ENCODE measurements at regions of chr1 and their contacts with region 1.

Region 1: DNA sequence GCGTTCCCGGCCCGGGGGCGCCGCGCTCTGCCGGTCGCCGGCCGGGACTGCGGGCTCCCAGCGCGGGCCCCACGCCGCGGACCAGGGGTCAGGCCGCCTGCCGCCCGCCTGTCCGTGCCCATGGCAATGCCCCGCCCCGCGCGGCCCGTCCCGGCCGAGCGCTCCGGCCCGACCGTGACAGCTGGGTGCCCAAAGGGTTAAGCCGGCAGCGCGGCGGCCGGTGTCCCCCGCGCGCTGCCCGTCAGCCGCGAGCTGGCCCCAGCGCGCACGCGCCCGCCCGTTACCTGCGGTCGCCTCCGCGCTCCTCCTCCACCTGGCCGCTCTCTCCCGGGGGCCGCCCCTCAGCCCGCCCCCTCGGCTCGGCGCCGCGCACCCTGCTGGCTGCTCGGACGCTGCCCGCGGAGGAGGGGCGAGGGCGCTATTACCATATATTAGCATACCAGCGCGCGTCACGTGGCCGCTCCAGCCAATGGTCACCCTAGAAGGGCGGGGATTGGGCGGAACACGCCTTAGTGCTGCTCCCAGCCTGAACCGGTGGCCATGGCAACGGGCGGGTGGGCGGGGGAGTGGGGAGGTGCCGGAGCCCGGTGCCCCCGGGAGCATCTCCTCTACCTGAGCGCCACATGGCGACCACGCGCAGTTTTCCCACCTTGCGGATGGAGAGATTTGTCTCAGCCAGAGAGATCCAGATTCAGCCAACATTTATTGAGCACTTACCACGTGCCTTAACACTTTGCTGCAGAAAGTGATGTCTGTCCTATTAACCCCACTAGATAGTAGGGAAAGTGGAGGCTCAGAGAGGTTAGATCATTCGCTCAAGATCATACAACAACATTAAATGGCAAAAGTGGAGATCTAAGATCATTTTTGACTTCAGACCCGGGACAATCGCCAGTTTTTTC is at the start of gene PHC2:
- DNase-seq: peak; percentile 95 to 97
- H3K4me3 ChIP-seq: peak within 1 kb of the TSS; percentile 61
- H3K4me3 Mint-ChIP-seq: peak within 1 kb of the TSS; percentile 46
- H3K27ac Mint-ChIP-seq: no peak within 1 kb of the TSS
- H3K4me1 ChIP-seq: peaks cover 6% of the 10 kb centered on the region; the same call in 1 of the 2 replicates
- H3K4me1 Mint-ChIP-seq: no peaks in the 10 kb centered on the region
- H3K27me3 ChIP-seq: no peaks in the 10 kb centered on the region
- H3K27me3 Mint-ChIP-seq: no peaks in the 10 kb centered on the region
- CTCF ChIP-seq: no peak
- total RNA-seq, gene PHC2: 31.8 and 35.2 TPM in 2 replicates

Region 2: GRCh38 chr1:33334081-33334552 is 96.8 kb before region 1 on chr1:
- CTCF ChIA-PET with region 1: no interaction called
- POLR2A ChIA-PET with region 1: no interaction called
- intact Hi-C with region 1: no loop called
- DNase-seq: no peak
- H3K4me3 ChIP-seq: no peak overlapping the region
- H3K4me3 Mint-ChIP-seq: no peak overlapping the region
- H3K27ac Mint-ChIP-seq: no peak overlapping the region
- H3K4me1 ChIP-seq: peaks cover 16% of the 10 kb centered on the region
- H3K4me1 Mint-ChIP-seq: peaks cover 14% of the 10 kb centered on the region
- H3K27me3 ChIP-seq: no peaks in the 10 kb centered on the region
- H3K27me3 Mint-ChIP-seq: no peaks in the 10 kb centered on the region
- CTCF ChIP-seq: no peak

Region 3: GRCh38 chr1:33378976-33379375 is 52.0 kb before region 1 on chr1:
- CTCF ChIA-PET with region 1: no interaction called
- POLR2A ChIA-PET with region 1: interaction called, 3 read pairs
- intact Hi-C with region 1: loop called (anchors 10 kb)
- DNase-seq: no peak
- H3K4me3 ChIP-seq: no peak overlapping the region
- H3K4me3 Mint-ChIP-seq: no peak overlapping the region
- H3K27ac Mint-ChIP-seq: no peak overlapping the region
- H3K4me1 ChIP-seq: peaks cover 16% of the 10 kb centered on the region
- H3K4me1 Mint-ChIP-seq: peaks cover 11% of the 10 kb centered on the region
- H3K27me3 ChIP-seq: no peaks in the 10 kb centered on the region
- H3K27me3 Mint-ChIP-seq: no peaks in the 10 kb centered on the region
- CTCF ChIP-seq: no peak

Region 4: DNA sequence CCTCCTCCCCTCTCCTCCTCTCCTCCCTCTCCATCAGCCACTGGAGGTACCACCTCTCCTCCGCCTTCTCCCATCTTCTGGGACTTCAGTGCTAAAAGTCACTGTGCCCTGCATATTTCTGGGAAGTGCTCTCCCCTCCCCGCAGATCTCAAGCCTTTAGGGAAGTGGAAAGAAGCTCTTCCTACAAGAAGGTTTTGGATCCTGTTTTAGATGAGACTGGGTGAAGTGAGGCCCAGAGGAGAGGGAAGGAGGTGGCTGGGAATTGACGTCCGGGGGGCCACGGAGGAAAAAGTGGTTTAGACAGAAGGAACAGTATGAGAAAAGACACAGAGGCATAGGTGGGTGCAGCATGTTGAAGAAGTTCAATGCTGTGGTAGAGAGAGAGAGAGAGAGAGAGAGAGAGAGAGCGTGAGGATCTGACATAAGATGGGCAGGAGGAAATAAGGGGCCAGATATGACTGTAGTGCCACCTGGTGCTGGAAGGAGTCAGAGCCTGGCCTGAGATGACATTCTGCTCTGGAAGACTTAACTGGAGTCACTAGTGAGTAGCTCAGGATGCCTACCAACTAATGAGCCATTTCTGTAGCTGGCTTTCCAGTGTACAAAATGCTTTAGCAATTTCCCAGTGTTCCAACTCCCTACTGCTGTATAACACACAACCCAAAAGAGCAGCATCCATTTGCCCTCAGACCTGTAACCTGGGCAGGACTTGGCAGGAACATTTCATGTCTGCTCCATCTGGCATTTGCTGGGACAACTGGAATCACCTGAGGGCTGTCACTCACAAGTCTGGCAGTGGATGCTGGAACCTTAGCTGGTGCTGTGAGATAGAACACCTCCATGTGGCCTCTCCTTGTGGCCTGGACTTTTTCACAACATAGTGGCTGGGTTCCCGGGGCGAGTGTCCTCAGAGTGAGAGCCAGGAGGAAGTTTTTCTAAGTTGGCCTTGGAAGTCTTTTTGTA is 24.9 kb after region 1 on chr1:
- CTCF ChIA-PET with region 1: no interaction called
- POLR2A ChIA-PET with region 1: no interaction called
- intact Hi-C with region 1: no loop called
- DNase-seq: peak; percentile 45 to 54
- H3K4me3 ChIP-seq: no peak overlapping the region
- H3K4me3 Mint-ChIP-seq: no peak overlapping the region
- H3K27ac Mint-ChIP-seq: no peak overlapping the region
- H3K4me1 ChIP-seq: no peaks in the 10 kb centered on the region
- H3K4me1 Mint-ChIP-seq: peaks cover 6% of the 10 kb centered on the region
- H3K27me3 ChIP-seq: no peaks in the 10 kb centered on the region
- H3K27me3 Mint-ChIP-seq: peaks cover 3% of the 10 kb centered on the region
- CTCF ChIP-seq: peak in 1 of 2 experiments; percentile 58

Region 5: DNA sequence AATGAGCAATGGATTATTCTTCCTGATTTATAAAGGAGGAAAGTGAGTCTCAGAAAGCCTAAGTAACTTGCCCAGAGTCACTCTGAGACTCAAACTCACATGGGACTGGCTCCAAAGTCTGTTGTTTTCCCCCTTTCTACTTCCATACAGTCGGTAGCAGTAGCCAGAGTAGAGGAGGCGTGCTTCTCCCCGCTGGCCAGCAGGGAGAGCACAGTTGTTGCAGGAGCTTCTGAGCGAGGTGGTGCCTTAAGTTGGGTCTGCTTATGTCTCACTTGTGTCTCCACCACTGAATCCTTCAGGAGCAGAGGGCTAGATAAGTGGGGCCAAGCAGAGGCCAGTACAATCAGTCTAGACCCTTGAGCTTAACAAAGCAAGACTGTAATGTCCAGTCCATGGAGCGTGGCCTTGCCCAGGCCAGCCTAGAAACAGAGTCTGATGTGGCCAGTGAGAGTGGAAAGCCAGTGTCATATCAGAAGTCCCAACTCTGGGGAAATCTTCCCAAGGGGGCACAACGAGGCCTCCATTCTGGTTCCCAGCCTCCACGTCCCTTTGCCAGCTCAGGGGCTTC is 223.4 kb after region 1 on chr1:
- CTCF ChIA-PET with region 1: no interaction called
- POLR2A ChIA-PET with region 1: no interaction called
- intact Hi-C with region 1: no loop called
- DNase-seq: no peak
- H3K4me3 ChIP-seq: no peak overlapping the region
- H3K4me3 Mint-ChIP-seq: no peak overlapping the region
- H3K27ac Mint-ChIP-seq: no peak overlapping the region
- H3K4me1 ChIP-seq: no peaks in the 10 kb centered on the region
- H3K4me1 Mint-ChIP-seq: no peaks in the 10 kb centered on the region
- H3K27me3 ChIP-seq: no peaks in the 10 kb centered on the region
- H3K27me3 Mint-ChIP-seq: peaks cover 5% of the 10 kb centered on the region
- CTCF ChIP-seq: peak in 1 of 2 experiments; percentile 26

Measured in Caco-2 (cell line).